Cardiac septum (tissue), 1 donor: ENCODE measurements at regions of chr2 and their contacts with region 1.

Region 1: DNA sequence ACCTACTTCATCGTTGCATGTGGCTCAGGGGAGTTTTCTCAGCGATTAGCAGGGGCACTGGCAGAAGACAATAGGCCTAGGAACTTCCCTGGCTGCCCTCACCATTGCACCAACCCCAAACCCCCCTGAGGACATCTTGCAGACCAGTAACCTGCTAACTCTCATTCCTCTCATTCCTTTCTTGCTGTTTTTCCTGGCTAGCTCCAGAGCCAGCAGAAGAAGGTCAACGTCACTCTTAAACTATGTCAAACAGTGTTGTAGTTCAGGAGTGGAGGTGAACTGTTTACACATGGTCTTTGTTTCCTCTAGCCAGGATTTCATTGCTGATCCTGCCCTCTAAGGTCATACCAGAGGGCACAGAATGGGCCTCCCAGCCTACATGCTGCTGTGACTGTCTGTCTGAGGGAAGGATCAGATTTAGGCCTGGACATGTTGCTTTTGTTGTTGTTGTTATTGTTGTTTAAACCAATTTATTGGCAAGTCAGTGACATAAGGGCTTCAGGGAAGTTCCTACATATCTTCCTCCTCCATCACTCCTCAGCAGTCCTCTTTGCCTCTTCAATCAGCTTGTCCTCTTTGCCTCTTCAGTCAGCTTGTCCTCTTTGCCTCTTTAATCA is 471.8 kb upstream of the TNP1 start:
- DNase-seq: no peak

Region 2: DNA sequence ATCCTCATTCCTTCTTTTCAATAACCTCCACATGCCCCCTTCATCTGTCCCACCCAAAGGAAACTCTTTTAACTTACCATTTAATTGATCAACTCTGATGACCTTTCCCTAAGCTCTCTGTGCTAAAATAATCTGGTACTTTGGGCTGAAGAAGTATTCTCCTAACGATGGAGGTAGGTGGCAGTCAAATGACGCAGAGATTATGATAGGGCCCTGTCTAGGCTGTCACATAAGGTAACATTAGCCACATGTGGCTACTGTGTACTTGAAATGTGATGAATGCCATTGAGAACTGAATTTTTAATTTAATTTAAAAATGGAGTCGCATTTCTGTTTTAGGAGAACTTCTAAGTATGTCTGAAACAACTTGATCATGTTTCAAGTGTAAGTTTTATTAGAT is 331.2 kb before region 1 on chr2:
- intact Hi-C with region 1: no loop called
- DNase-seq: no peak

Region 3: DNA sequence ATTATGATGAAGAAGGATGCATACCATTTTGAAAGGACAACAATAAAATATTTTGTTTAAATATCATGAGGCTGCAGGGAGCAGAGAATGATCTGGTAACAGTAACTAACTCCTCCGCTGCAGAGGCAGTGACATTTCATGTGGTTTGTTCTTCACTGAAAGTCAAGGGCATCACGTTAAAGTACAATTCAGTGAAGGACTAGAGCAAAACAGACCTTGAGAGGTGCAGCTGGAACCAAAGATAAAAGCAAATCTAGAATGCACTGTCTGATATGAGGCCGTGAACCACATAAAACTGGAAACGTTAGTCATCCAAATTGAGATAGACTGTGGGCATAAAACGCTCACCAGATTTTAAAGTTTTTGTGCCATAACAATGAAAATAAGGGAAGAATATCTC is 51.2 kb after region 1 on chr2:
- intact Hi-C with region 1: loop called (anchors 5 kb)
- DNase-seq: no peak

Region 4: GRCh38 chr2:217434181-217434975 is 102.7 kb after region 1 on chr2:
- intact Hi-C with region 1: loop called (anchors 5 kb)
- DNase-seq: peak; percentile 93